Ovary (tissue), 10 donors: ENCODE measurements at regions of chr10 and their contacts with region 1.

Region 1: GRCh38 chr10:74826142-74827044 is at the start of gene KAT6B:
- DNase-seq: peak; percentile 100
- H3K4me3 ChIP-seq: peak within 1 kb of the TSS; percentile 98
- H3K27ac ChIP-seq: peak within 1 kb of the TSS; percentile 97 to 100
- H3K4me1 ChIP-seq: peaks cover 10% of the 10 kb centered on the region
- H3K27me3 ChIP-seq: no peaks in the 10 kb centered on the region
- CTCF ChIP-seq: peak; percentile 21 to 40 (median 30)
- EP300 ChIP-seq: peak; percentile 45
- POLR2A ChIP-seq: peak; percentile 66
- total RNA-seq, gene KAT6B: 43.1 to 61.6 (median 52.1) TPM

Region 2: DNA sequence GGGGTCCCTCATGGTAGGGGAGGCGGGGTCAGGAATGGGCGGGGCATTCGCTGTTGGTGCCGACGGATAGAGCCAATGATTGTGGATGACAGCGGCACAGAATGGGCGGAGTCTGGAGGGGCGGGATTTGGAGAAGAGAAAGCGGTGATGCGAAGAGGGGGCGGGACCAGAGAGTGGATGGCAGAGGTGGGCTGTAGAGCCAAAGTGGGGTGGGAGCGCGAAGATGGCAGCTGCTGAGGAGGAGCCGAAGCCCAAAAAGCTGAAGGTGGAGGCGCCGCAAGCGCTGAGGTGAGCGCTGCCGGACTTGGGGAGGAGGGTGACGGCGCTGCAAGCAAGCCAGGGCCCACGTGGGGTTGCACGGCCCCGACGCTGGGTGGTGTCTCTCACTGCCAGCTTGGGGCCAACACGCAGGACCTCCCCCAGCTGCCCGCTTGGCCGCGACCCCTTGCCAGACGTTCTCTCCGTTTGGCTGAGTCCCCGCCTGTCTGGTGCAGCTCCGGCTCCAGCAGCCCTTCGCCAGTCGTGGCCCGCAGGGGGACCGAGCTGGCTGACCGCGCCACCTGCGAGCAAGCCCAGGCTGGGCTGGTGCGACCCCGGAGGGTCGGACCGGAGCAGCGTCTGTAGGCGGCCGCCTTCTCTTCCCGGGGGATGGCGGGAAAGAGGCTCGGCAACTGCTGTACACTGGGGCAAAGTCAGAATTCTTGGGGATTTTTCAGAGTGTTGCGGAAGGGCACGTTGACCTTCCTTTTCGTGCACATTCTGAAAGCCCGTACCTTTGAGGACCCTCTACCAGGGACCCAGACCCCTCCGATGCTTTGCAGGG is 675.1 kb before region 1 on chr10 and contains the start of gene ADK:
- intact Hi-C with region 1: loop called in 1 of 4 experiments (anchors 5 kb)
- DNase-seq: peak; percentile 100
- H3K4me3 ChIP-seq: peak within 1 kb of the TSS; percentile 93
- H3K27ac ChIP-seq: peak within 1 kb of the TSS; percentile 53 to 86
- H3K4me1 ChIP-seq: peaks cover 2% of the 10 kb centered on the region
- H3K27me3 ChIP-seq: no peaks in the 10 kb centered on the region
- CTCF ChIP-seq: peak in 1 of 3 donors; percentile 59
- EP300 ChIP-seq: no peak
- POLR2A ChIP-seq: peak; percentile 44
- total RNA-seq, gene ADK: 10.9 to 20.4 (median 12.2) TPM

Region 3: DNA sequence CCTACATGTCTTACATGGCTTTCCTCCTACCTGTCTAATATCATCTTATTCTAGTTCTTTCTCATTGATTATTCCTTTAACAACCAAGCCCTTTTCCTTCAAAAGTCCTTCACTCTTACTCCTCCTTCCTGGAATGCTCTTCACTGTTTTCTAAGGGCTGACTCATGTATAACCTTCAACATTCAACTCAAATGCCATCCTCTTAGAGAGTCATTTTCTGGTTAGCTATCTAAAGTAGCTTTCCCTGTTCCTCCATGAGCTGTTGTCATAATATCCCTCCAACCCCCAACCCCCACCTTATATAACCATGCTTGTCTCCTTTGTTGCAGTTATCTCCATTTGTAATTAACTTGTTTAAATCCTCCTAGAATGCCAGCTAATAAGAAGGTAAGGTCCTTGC is 388.6 kb before region 1 on chr10:
- intact Hi-C with region 1: no loop called
- DNase-seq: no peak
- H3K4me3 ChIP-seq: no peak overlapping the region
- H3K27ac ChIP-seq: no peak overlapping the region
- H3K4me1 ChIP-seq: no peaks in the 10 kb centered on the region
- H3K27me3 ChIP-seq: no peaks in the 10 kb centered on the region
- CTCF ChIP-seq: no peak
- EP300 ChIP-seq: no peak
- POLR2A ChIP-seq: no peak

Region 4: GRCh38 chr10:74799721-74800221 is 26.6 kb before region 1 on chr10:
- intact Hi-C with region 1: no loop called
- DNase-seq: no peak
- H3K4me3 ChIP-seq: no peak overlapping the region
- H3K27ac ChIP-seq: no peak overlapping the region
- H3K4me1 ChIP-seq: no peaks in the 10 kb centered on the region
- H3K27me3 ChIP-seq: no peaks in the 10 kb centered on the region
- CTCF ChIP-seq: no peak
- EP300 ChIP-seq: no peak
- POLR2A ChIP-seq: no peak